HepG2 (cell line): ENCODE measurements at regions of chr6 and their contacts with region 1.

Region 1: DNA sequence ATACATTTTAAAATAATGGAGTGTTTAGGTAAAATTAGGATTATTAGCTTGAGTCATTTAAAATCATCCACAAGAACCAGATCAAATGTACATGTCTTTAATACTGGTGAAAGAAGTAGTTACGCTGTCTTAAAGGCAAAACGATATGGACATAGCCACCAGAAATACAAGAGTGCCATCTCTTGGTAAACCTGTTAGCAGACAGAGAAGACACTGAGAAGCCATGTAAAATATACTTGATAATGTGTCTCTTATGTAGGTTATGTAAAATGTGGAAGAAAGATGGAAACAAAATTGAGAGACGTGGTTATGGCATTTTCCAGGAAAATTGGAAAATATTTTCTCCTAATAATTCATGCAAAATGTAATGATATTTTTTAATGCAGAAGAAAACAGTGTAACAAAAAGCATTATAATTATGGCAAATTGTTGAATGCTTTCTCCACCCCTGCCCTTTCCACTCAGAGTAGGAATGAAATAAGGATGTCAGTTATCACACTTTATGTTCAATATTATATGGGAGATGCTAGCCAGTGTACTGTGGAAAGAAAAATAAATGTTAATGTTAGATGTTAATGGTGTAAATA is 12.2 kb upstream of the SLC17A2 start:
- DNase-seq: peak; percentile 76
- ATAC-seq: peak; percentile 93
- H3K4me3 ChIP-seq: no peak overlapping the region
- H3K27ac ChIP-seq: no peak overlapping the region
- H3K4me1 ChIP-seq: peaks cover 34% of the 10 kb centered on the region
- H3K27me3 ChIP-seq: no peaks in the 10 kb centered on the region
- CTCF ChIP-seq: peak; percentile 92
- EP300 ChIP-seq: no peak; a peak in 1 of 4 replicates
- POLR2A ChIP-seq: no peak
- RAD21 ChIP-seq: peak; percentile 89

Region 2: GRCh38 chr6:25278914-25279747 is 663.5 kb before region 1 on chr6 and contains the start of gene CARMIL1:
- CTCF ChIA-PET with region 1: no interaction called
- POLR2A ChIA-PET with region 1: no interaction called
- in situ Hi-C with region 1: no loop called
- intact Hi-C with region 1: loop called (anchors 5 kb)
- DNase-seq: peak; percentile 54
- ATAC-seq: peak; percentile 92
- H3K4me3 ChIP-seq: peak within 1 kb of the TSS; percentile 67 to 81 (median 79)
- H3K27ac ChIP-seq: no peak within 1 kb of the TSS
- H3K4me1 ChIP-seq: peaks cover 35% of the 10 kb centered on the region
- H3K27me3 ChIP-seq: peaks cover 0 to 21% of the 10 kb centered on the region in 2 experiments; a peak in 3 of 5 replicates
- CTCF ChIP-seq: peak; percentile 86
- EP300 ChIP-seq: no peak
- POLR2A ChIP-seq: no peak
- RAD21 ChIP-seq: peak; percentile 91
- total RNA-seq, gene CARMIL1: 2.6 and 2.9 TPM in 2 replicates

Region 3: GRCh38 chr6:25717866-25718740 is 224.6 kb before region 1 on chr6:
- CTCF ChIA-PET with region 1: interaction called, 13 read pairs
- POLR2A ChIA-PET with region 1: no interaction called
- in situ Hi-C with region 1: no loop called
- intact Hi-C with region 1: loop called (anchors 1 kb)
- DNase-seq: peak; percentile 39
- ATAC-seq: no peak
- H3K4me3 ChIP-seq: no peak overlapping the region
- H3K27ac ChIP-seq: no peak overlapping the region
- H3K4me1 ChIP-seq: peaks cover 38% of the 10 kb centered on the region
- H3K27me3 ChIP-seq: no peaks in the 10 kb centered on the region
- CTCF ChIP-seq: peak; percentile 64
- EP300 ChIP-seq: no peak
- POLR2A ChIP-seq: no peak
- RAD21 ChIP-seq: peak; percentile 56; the same call in 1 of the 2 replicates

Region 4: GRCh38 chr6:25793970-25794369 is 148.7 kb before region 1 on chr6:
- CTCF ChIA-PET with region 1: interaction called, 40 read pairs
- POLR2A ChIA-PET with region 1: no interaction called
- in situ Hi-C with region 1: loop called (anchors 5 kb)
- intact Hi-C with region 1: no loop called
- DNase-seq: no peak
- ATAC-seq: no peak
- H3K4me3 ChIP-seq: no peak overlapping the region
- H3K27ac ChIP-seq: no peak overlapping the region
- H3K4me1 ChIP-seq: no peaks in the 10 kb centered on the region
- H3K27me3 ChIP-seq: no peaks in the 10 kb centered on the region
- CTCF ChIP-seq: no peak
- EP300 ChIP-seq: no peak
- POLR2A ChIP-seq: no peak
- RAD21 ChIP-seq: no peak

Region 5: DNA sequence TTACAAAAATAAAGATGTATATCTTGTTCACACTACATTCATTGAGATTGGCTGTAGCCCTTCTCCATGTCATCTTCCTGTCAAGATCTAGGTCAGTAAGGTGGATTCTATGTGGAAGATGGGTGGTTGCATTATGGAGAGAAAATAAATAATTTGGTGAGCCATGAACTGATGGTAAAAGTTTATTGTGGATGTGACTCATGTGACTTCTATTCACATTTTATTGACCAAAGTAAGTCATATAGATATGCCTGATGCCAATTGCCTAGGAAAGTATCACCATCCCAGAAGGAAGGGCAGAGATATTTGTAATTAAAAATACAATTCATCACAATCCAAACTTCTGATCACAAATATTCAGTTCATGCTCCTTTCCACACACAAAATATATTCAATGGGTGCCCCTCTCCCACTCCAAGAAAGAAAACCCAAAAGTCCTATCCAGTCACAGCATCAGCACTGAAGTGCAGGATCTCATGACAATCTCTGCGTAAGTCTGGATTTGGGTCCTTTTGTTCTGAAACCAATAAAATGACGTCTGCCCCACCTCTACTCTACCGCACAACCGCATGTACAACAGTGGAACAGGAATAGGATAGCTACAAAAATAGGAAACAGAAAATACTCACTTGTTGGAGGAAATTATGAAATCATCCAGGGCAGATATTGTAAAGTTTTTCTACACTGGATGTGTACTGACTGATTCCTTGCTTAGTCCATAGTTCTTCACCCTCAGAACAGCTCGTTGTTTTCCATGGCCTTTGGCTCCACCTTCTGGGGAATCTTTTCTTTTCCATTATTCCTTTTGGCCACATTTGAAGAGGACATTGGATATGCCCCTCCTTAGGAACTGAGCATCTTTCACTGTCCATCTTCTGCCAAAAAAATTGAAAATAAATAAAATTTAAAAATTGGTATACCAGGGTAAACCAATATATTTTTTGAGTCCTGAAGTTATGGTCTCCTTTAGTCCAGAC is 52.5 kb before region 1 on chr6:
- CTCF ChIA-PET with region 1: interaction called, 16 read pairs
- POLR2A ChIA-PET with region 1: no interaction called
- in situ Hi-C with region 1: no loop called
- intact Hi-C with region 1: loop called (anchors 1 kb)
- DNase-seq: peak; percentile 70
- ATAC-seq: peak; percentile 95
- H3K4me3 ChIP-seq: no peak overlapping the region
- H3K27ac ChIP-seq: no peak overlapping the region
- H3K4me1 ChIP-seq: peaks cover 14% of the 10 kb centered on the region
- H3K27me3 ChIP-seq: no peaks in the 10 kb centered on the region
- CTCF ChIP-seq: peak; percentile 91
- EP300 ChIP-seq: no peak
- POLR2A ChIP-seq: no peak
- RAD21 ChIP-seq: peak; percentile 90

Region 6: DNA sequence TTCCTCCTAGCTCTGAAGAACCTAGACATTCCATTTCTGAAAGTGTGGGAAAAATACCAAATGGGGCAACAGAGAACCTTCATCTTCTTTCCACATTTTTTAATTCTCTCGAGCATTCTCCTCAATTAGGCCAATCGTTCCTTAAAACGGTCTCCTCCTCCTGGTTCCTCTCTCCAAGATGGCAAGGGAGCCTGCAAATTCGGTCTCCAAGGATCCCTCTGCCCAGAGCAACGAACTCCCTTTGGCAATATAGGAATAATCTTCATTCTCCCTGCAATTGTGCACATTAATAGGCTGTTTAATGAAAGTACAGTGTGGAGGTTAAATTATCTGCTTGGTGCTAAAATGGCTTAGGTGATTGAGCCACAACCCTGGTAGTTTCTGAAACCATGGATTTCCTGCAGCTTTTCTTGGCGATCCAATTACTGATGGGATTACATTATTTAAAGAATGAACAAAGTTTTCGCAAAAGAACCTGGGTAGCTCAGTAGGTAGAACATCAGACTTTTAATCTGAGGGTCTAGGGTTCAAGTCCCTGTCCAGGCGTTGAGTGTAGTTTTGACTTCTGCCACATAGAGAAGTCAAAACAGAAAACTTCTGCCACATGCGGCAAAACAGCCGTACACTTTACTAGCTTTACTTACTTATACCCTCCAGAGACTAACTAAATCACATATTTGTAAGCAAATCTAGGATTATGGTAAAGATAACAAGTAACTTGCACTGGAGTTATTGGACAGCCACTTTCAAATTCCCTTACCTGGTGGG is 1633.1 kb after region 1 on chr6:
- CTCF ChIA-PET with region 1: no interaction called
- POLR2A ChIA-PET with region 1: no interaction called
- in situ Hi-C with region 1: no loop called
- intact Hi-C with region 1: no loop called
- DNase-seq: peak; percentile 27
- ATAC-seq: no peak; the same call in 2 of the 3 replicates
- H3K4me3 ChIP-seq: no peak overlapping the region
- H3K27ac ChIP-seq: no peak overlapping the region
- H3K4me1 ChIP-seq: peaks cover 11% of the 10 kb centered on the region; the same call in 1 of the 2 replicates
- H3K27me3 ChIP-seq: peaks cover 0 to 7% of the 10 kb centered on the region in 2 experiments; a peak in 1 of 5 replicates
- CTCF ChIP-seq: no peak
- EP300 ChIP-seq: no peak
- POLR2A ChIP-seq: no peak
- RAD21 ChIP-seq: no peak